Natural killer cell (primary cell): ENCODE measurements at regions of chr2 and their contacts with region 1.

Region 1: DNA sequence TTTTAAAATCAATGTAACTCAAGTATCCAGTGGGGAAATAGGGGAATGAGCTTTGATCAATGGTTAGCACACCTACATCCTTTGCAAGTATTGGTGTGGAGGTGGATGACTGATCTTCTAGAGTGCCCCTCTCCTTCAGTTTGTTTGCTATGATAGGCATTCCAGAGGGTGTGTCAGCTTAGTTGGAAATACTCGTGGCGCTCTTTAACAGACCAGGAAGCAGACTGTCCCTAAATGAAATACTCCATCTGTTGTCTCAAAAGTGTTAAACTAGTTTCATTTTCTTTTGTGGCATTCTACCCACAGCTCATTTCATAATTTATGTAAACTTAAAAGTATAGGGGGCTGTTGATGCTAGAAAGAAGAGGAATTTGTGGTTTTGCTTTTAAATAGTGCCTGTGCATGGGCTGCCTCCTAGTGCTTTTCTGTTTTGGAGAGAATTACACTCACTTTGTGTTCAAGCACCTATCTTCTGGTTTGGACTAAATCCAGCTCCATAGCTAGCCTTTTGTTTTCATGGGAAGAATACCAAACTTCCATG is 66.2 kb downstream of the STAT1 start:
- DNase-seq: peak in 1 of 2 donors; percentile 67
- ATAC-seq: peak; percentile 77 to 88 (median 81)
- H3K4me3 ChIP-seq: no peak overlapping the region
- H3K4me3 Mint-ChIP-seq: peak overlapping the region; percentile 32
- H3K27ac ChIP-seq: peak overlapping the region; percentile 54
- H3K27ac Mint-ChIP-seq: no peak overlapping the region
- H3K4me1 ChIP-seq: peaks cover 3% of the 10 kb centered on the region
- H3K4me1 Mint-ChIP-seq: no peaks in the 10 kb centered on the region
- H3K27me3 ChIP-seq: no peaks in the 10 kb centered on the region
- H3K27me3 Mint-ChIP-seq: no peaks in the 10 kb centered on the region
- CTCF ChIP-seq: peak; percentile 10

Region 2: GRCh38 chr2:190849774-190850173 is 98.0 kb before region 1 on chr2:
- intact Hi-C with region 1: loop called (anchors 1 kb)
- DNase-seq: no peak
- ATAC-seq: no peak
- H3K4me3 ChIP-seq: no peak overlapping the region
- H3K4me3 Mint-ChIP-seq: no peak overlapping the region
- H3K27ac ChIP-seq: no peak overlapping the region
- H3K27ac Mint-ChIP-seq: no peak overlapping the region
- H3K4me1 ChIP-seq: no peaks in the 10 kb centered on the region
- H3K4me1 Mint-ChIP-seq: no peaks in the 10 kb centered on the region
- H3K27me3 ChIP-seq: no peaks in the 10 kb centered on the region
- H3K27me3 Mint-ChIP-seq: no peaks in the 10 kb centered on the region
- CTCF ChIP-seq: no peak

Region 3: GRCh38 chr2:191145769-191146471 is 198.1 kb after region 1 on chr2:
- intact Hi-C with region 1: no loop called
- DNase-seq: no peak
- ATAC-seq: peak; percentile 11 to 57 (median 16)
- H3K4me3 ChIP-seq: no peak overlapping the region
- H3K4me3 Mint-ChIP-seq: peak overlapping the region; percentile 88
- H3K27ac ChIP-seq: peak overlapping the region; percentile 92
- H3K27ac Mint-ChIP-seq: peak overlapping the region; percentile 95 to 98
- H3K4me1 ChIP-seq: peaks cover 26% of the 10 kb centered on the region
- H3K4me1 Mint-ChIP-seq: peaks cover 74 to 81% of the 10 kb centered on the region in 2 donors
- H3K27me3 ChIP-seq: no peaks in the 10 kb centered on the region
- H3K27me3 Mint-ChIP-seq: no peaks in the 10 kb centered on the region
- CTCF ChIP-seq: no peak